WTC11 (cell line): ENCODE measurements at regions of chr13 and their contacts with region 1.

Region 1: DNA sequence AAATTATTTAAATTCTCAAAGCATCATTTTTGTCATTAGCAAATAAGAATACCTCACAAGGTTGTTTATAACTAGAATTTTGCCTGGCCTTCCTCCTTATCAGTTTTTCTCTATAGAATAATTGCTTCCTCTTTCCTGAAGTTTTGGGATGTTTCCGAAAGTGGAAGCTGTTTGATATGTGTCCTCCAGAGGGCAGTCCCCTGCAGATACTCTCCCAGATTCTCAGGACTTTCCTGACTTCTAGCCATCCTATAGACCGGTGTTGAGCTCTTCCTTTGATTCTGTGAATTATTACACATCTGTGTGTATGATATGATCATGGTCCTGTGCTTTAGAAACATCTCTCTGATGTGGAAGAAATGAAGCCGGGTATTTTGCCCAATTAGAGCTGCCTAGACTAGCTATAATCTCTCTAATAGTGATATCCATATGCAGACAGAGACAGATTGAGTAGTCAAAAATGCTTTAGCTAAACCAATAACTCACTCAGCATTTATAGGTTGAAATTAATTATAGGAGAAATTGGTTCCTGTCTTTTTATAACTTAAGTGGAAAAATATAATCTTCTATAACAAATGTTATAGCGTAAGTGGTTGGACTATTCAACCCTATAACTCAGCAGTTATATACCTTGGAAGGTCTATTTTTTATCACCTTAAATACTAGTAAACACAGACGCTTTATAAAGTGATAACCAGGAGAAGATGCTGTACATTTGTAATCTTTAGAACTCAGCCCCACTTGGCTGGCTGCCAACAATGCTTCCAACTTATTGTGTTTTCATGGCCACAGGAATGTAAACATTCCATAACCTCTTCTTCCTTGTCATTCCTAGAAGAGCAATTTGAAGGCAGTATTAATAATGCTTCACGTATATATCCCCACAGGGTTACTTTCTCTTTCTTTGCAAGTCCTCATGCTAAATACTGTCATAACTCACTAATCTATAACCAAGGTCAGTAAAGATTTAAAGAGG is 201.0 kb upstream of the RXFP2 start:
- DNase-seq: no peak
- ATAC-seq: peak; percentile 86
- H3K4me3 Mint-ChIP-seq: no peak overlapping the region
- H3K27ac Mint-ChIP-seq: no peak overlapping the region
- H3K4me1 Mint-ChIP-seq: 0 out of 2 replicates have a peak, but pooled peaks cover 3% of the 10 kb centered on the region
- H3K27me3 Mint-ChIP-seq: no peaks in the 10 kb centered on the region
- CTCF ChIP-seq: peak; percentile 30; the same call in 1 of the 2 replicates

Region 2: DNA sequence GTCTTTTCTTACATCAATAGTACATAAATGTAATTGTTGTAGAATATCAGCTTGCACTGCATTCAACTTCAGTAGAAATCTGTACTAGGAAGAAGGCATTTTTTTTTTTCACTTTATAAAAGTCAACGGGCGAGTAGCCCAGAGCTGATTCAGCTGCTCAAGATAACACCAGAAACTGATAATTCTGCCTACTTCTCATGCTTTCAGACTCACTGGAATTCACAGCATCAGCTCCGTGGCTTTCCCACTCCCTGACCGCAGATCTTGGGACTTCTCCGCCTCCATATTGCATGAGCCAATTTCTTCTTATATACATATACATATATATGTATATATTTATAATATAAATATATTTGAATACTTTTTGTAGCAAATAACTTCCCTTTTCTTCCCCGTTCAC is 62.1 kb before region 1 on chr13:
- CTCF ChIA-PET with region 1: interaction called, 14 read pairs
- POLR2A ChIA-PET with region 1: no interaction called
- DNase-seq: no peak
- ATAC-seq: no peak
- H3K4me3 Mint-ChIP-seq: no peak overlapping the region
- H3K27ac Mint-ChIP-seq: no peak overlapping the region
- H3K4me1 Mint-ChIP-seq: peaks cover 8% of the 10 kb centered on the region
- H3K27me3 Mint-ChIP-seq: no peaks in the 10 kb centered on the region
- CTCF ChIP-seq: no peak

Region 3: DNA sequence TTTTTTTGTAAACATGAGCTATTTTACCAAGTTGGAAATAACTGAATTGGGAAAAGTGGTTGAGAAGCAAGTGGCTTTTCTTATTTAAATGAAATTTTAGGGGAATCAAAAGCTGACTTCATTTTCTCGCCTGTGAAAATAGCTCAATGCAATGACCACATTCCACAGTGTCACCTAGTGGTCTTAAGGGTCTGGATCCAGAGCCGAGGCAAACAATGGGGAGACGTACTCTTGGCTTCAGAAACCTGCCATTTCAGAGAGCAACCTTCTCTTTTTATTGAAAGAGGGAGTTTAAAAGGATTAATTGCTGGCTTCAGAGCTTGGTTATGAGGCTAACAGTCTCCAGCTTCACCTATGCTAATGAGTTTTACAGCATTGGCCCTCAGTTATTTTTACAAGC is 161.3 kb after region 1 on chr13:
- CTCF ChIA-PET with region 1: interaction called, 32 read pairs
- POLR2A ChIA-PET with region 1: no interaction called
- DNase-seq: peak; percentile 12
- ATAC-seq: peak; percentile 87
- H3K4me3 Mint-ChIP-seq: no peak overlapping the region
- H3K27ac Mint-ChIP-seq: no peak overlapping the region
- H3K4me1 Mint-ChIP-seq: peaks cover 33% of the 10 kb centered on the region
- H3K27me3 Mint-ChIP-seq: no peaks in the 10 kb centered on the region
- CTCF ChIP-seq: no peak

Region 4: GRCh38 chr13:31742097-31742734 is 203.9 kb after region 1 on chr13:
- CTCF ChIA-PET with region 1: interaction called, 31 read pairs
- POLR2A ChIA-PET with region 1: no interaction called
- DNase-seq: peak; percentile 75
- ATAC-seq: peak; percentile 84
- H3K4me3 Mint-ChIP-seq: no peak overlapping the region
- H3K27ac Mint-ChIP-seq: no peak overlapping the region
- H3K4me1 Mint-ChIP-seq: peaks cover 7% of the 10 kb centered on the region
- H3K27me3 Mint-ChIP-seq: no peaks in the 10 kb centered on the region
- CTCF ChIP-seq: peak; percentile 95